HCT116 (cell line): ENCODE measurements at regions of chr6 and their contacts with region 1.

Region 1: GRCh38 chr6:139219271-139219729 is 72.5 kb downstream of the TXLNB start:
- DNase-seq: peak; percentile 73
- ATAC-seq: peak; percentile 100
- H3K4me3 ChIP-seq: no peak overlapping the region
- H3K27ac ChIP-seq: no peak overlapping the region
- H3K4me1 ChIP-seq: peaks cover 0 to 3% of the 10 kb centered on the region in 2 experiments; a peak in 1 of 4 replicates
- H3K27me3 ChIP-seq: no peaks in the 10 kb centered on the region
- CTCF ChIP-seq: peak; percentile 63 to 77 (median 72); a peak in 5 of 6 replicates
- POLR2A ChIP-seq: no peak
- RAD21 ChIP-seq: peak; percentile 90

Region 2: DNA sequence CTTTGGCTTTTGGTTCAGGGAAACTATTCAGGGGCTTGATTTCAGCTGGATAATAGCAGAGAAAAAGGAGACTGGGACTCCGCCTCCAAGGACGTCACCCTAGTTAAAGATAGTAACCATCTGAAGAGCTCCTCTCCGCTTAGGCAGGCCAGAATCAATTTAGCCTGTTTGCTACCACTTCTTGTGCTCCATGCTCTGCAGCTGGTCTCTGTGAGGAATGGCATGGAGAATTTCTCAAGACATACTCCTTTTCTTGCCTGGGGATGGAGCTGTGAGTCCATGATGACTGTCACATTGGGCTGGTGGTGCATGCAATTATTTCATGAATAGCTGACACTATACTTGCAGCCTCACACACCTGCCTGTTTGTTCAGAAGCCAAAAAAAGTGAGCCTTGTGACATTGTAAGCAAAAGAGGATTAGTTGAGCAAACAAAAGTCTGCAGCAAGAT is 11.1 kb after region 1 on chr6:
- CTCF ChIA-PET with region 1: interaction called, 13 read pairs
- POLR2A ChIA-PET with region 1: no interaction called
- RAD21 ChIA-PET with region 1: interaction called in 1 of 2 experiments, 3 read pairs
- intact Hi-C with region 1: no loop called
- DNase-seq: no peak
- ATAC-seq: no peak
- H3K4me3 ChIP-seq: no peak overlapping the region
- H3K27ac ChIP-seq: no peak overlapping the region
- H3K4me1 ChIP-seq: no peaks in the 10 kb centered on the region
- H3K27me3 ChIP-seq: no peaks in the 10 kb centered on the region
- CTCF ChIP-seq: 0 out of 6 replicates have a peak, but pooled peaks of 1 of the 3 experiments have one; percentile 7
- POLR2A ChIP-seq: no peak
- RAD21 ChIP-seq: peak; percentile 50; the same call in 1 of the 2 replicates